Activated CD8-positive, alpha-beta memory T cell treated with anti-CD3 and anti-CD28 coated beads, Interleukin-2, amount 10 ng/mL, durations not matched to agents 7 days and 5 days (primary cell): ENCODE measurements at regions of chr17 and their contacts with region 1.

Region 1: GRCh38 chr17:40559954-40560591 is 5.2 kb downstream of the CCR7 start:
- DNase-seq: peak; percentile 90
- ATAC-seq: peak; percentile 43
- H3K4me3 Mint-ChIP-seq: peak overlapping the region; percentile 77
- H3K27ac Mint-ChIP-seq: peak overlapping the region; percentile 93
- H3K4me1 Mint-ChIP-seq: peaks cover 91% of the 10 kb centered on the region
- H3K27me3 Mint-ChIP-seq: peaks cover 5% of the 10 kb centered on the region

Region 2: DNA sequence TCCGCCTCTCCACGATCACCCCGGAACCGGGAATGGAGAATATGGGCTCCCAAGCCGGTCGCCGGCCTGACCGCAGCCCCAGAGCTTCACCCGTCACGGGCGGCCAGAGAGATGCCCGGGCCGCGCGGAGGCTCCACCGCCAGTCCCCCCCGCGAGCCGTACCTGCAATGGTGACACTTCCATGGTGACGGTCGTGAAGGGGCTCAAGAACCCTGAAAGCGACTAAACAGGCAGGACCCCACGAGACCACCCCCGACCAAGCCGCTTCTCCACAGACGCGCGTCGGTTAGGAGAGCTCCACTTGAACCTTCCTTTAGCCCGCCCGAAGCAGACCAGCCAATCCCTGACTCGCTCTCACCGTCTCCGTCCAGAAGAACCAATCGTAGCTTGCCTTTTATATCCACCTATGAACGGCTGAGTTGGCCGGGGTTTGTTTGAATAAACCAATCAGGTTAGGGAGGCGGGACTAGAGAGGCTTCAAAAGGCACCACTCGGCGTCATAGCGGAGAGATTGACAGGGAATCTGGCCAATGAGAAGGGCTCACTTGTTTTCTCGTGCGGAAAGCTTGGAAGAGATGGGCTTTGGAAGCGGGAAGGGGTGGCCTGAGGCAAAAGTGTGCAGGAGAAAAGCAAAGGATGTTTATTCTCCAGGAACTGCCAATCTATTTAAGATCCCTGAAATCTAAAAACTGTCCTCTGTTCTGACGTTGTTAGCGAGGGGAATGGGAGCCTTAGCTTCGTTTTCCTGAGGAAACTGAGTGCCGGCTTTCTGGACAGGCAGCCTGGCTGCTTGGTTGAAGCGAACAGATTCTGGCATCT is 142.3 kb before region 1 on chr17 and contains the start of gene TOP2A:
- CTCF ChIA-PET with region 1: interaction called, 34 read pairs
- DNase-seq: peak; percentile 98
- ATAC-seq: peak; percentile 98
- H3K4me3 Mint-ChIP-seq: peak within 1 kb of the TSS; percentile 89
- H3K27ac Mint-ChIP-seq: peak within 1 kb of the TSS; percentile 95
- H3K4me1 Mint-ChIP-seq: peaks cover 28% of the 10 kb centered on the region
- H3K27me3 Mint-ChIP-seq: peaks cover 6% of the 10 kb centered on the region
- total RNA-seq, gene TOP2A: 310 to 347 TPM

Region 3: DNA sequence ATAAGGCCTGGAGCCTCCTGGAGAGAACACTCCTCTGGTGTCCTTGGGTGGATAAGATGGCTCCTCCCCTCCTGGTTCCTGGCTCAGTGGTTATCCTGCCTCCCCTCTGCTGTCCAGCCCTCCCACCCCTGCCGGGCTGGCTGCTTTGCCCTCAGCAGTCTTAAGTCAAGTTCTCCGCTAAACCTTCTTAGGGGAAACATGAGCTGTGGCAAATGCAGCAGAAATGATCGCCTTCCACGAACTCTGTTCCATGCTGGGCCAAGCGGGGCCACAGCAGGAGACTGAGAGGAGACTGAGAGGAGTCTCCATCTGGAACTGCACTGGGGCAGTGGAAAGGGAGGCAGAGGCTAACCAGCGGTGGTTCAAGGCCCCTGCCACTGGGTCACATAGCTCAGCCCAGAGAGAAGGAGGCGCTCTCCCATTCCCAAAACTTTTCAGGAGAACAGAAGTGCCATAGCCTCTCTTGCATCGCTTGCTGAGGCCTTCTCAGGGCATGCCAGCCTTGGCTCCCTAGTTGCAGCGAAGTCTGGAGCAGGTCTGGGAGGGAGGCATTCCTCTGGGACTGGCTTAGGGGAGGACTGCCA is 85.6 kb before region 1 on chr17:
- CTCF ChIA-PET with region 1: interaction called, 18 read pairs
- DNase-seq: no peak
- ATAC-seq: no peak
- H3K4me3 Mint-ChIP-seq: no peak overlapping the region
- H3K27ac Mint-ChIP-seq: no peak overlapping the region
- H3K4me1 Mint-ChIP-seq: peaks cover 13% of the 10 kb centered on the region
- H3K27me3 Mint-ChIP-seq: peaks cover 9% of the 10 kb centered on the region

Region 4: DNA sequence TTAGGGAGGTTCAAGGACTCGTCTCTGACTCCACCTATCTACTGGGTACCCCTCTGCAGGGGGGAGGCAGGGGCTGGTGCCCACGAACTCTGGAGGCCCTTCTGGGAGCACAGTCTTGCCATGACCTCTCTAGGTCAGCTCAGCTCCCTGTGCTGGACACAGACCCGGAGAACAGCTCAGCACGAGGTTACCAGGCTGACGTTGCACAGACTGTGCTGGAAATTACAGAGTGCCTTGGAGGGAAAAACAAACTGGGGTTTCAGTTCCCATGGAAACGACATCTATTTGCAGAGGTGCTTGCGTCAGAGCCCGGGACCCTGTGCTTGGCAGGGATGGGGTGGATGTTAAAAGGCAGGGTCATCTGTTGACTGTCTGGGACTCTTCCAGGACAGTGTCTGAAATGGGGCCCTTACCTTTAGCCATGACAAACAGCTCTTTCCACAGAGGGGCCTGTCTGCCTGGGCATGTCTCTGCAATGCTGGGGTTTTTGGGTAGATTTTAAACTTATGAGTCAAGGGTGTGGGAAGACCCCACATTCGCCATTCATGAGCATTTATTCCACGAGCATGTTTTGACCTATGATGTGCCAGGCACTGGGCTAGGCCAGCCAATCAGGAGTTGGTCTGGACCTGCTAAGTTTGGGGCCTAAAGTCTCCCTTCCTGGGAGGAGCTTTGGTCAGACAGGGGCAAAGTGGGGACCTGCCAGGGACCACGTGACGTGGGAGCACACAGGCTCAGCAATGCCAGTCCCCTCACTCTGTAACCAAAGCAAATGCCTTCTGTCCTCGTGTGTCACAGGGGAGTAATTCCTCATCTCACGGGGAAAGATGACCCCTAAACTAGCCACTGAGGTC is 17.3 kb before region 1 on chr17:
- CTCF ChIA-PET with region 1: interaction called, 447 read pairs
- DNase-seq: peak; percentile 49
- ATAC-seq: peak; percentile 6
- H3K4me3 Mint-ChIP-seq: no peak overlapping the region
- H3K27ac Mint-ChIP-seq: peak overlapping the region; percentile 52
- H3K4me1 Mint-ChIP-seq: peaks cover 71% of the 10 kb centered on the region
- H3K27me3 Mint-ChIP-seq: peaks cover 3% of the 10 kb centered on the region

Region 5: GRCh38 chr17:40615295-40615988 is 55.4 kb after region 1 on chr17:
- CTCF ChIA-PET with region 1: interaction called, 44 read pairs
- DNase-seq: no peak
- ATAC-seq: no peak
- H3K4me3 Mint-ChIP-seq: no peak overlapping the region
- H3K27ac Mint-ChIP-seq: peak overlapping the region; percentile 60
- H3K4me1 Mint-ChIP-seq: peaks cover 66% of the 10 kb centered on the region
- H3K27me3 Mint-ChIP-seq: no peaks in the 10 kb centered on the region